ENCODE measurements at regions of chr2 and their contacts with region 1.

Region 1: DNA sequence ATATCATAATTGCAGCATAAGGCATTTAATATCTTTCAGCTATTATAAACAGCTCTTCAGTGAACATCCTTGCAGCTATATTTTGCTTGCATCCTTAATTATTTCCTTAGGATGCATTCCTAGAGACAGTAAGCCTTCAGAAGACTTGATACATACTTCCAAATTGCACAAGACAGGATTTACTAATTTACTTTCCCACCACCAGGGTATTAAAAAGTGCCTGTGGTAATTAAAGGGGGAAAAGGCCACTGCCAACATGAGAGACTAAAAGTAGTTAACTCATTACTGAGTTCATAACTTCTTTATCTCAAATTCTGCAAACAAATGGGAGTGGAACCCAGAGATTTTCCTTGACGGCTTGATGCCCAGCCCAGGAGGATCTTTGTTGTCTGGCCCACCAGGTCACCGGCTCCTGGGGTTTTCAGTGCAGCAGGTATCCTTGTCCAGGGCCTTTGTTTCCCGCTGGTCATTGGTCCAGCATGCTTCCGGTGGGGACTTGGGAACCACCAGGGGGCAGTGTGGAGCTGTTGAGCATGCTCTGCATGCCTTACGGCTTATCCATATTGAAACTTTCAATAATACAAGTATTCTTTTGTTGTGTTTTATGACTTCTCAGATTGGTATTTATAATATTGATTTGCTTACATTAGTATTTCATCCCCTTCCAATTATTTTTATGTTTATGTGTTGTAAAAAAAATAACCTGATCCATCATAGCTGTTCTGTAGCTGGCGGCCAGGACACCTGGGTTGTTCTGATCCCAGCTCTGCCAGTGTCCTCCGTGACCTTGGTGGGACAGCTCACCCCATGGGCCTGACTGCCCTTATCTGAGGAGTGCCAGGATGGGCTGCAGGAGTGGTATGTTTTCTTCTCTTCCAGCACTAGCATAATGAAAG is 61.4 kb downstream of the TGOLN2 start:
- DNase-seq: peak; percentile 83
- ATAC-seq: peak; percentile 55

Region 2: GRCh38 chr2:85288244-85288725 is 21.9 kb after region 1 on chr2:
- intact Hi-C with region 1: loop called (anchors 2 kb)
- DNase-seq: no peak
- ATAC-seq: no peak

Region 3: GRCh38 chr2:85327822-85328617 is 61.6 kb after region 1 on chr2 and contains the start of gene TGOLN2:
- intact Hi-C with region 1: no loop called
- DNase-seq: peak; percentile 98
- ATAC-seq: peak; percentile 99
- total RNA-seq, gene TGOLN2: 65.6 TPM

Measured in Right ventricle myocardium inferior (tissue), 1 donor.